Posterior vena cava (tissue), 2 donors: ENCODE measurements at regions of chr5 and their contacts with region 1.

Region 1: DNA sequence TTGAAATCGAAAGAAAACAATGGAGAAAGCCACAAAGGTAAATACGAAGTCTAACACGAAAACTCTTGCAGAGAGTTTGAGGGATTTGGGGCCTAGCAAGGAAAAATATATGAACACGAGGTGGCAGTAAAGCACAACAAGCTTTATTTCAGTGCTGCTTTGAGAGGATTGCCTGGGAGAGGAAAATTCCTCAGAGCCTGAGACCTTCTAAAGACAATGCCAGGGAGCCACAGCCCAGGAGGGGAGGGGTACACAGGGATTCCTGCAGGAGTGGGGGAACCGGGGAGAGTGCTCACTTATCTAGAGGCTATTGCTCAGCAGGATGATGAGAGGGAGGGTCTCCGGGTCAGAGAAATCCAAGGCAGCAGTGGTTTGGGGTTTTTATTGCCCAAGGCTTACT is 134.9 kb upstream of the ADCY2 start:
- DNase-seq: no peak

Region 2: DNA sequence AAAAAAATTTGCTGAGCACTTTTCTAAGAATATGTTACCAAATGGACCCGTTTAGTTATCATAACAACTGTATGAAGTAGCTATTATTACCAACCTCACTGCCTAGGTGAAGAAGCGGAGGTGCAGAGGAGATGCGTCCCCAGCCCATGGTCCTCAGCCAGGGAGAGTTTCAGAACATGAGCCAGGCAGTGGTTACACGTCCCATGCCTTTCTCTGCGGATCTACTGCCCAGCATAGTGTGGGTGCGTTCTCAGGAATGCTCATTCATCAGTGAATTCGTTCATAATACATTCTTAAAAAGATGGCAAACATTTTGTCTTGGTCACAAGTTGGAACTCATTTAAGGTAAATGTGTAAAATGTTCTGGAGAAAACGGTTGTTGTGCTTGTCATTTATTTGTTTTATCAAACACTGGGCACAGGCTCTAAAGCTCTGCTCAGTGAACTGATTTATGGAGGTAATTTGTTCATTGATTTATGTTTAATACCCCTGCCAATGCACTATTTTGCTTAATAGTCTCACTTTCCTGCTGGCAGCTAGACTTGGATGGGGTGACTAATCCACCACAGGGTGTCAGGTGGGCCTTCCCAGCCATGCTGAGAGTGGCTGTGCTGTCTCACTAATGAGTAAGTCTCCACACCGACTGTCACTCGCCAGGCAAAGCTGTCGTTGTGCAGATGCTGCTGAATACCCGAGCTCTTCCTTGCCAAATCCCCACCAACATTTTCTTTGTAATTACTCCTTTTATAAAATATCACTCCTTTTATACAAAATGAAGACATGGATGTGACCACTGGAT is 299.0 kb before region 1 on chr5:
- intact Hi-C with region 1: loop called in 1 of 2 experiments (anchors 5 kb)
- DNase-seq: no peak

Region 3: GRCh38 chr5:7728076-7728475 is 467.0 kb after region 1 on chr5:
- intact Hi-C with region 1: no loop called
- DNase-seq: no peak